CD14-positive monocyte (primary cell): ENCODE measurements at regions of chr14 and their contacts with region 1.

Region 1: DNA sequence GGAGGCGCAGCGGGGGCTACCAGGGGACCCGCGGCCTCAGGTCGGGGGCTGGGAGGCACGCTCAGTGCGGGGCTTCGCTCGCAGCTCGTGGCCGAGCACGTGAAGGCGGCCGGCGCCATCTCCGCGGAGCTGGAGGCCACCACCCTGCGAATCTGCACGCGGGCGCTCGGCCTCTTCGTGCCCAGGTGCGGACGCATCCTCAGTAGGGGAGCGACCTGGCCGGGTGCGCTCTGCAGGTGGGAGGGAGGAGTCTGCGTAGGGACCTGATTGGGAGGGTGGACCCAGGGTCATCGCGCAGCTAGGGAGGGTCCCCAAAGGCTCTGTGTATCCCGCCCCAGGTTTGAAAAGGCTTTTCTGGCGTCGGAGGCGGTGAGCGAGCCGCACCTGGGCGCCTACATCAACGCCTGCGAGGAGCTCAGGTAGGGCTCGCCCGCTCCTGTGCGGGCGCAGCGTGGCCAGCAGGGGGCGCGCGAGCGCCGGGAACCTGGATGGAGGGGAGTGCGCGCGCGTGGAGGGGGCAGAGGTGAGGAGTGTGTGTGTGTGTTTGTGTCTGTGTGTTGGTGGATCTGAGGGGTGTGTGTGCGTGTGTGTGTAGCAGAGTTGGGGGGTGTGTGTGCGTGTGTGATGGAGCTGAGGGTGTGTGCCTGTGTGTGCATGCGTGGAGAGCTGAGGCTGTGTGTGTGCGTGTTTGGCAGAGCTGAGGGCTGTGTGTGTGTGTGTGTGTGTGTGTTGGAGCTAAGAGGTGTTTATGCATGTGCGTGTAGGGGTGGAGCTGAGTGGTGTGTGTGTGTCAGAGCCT is 10.3 kb downstream of the EXOC3L4 start:
- DNase-seq: peak; percentile 55 to 69 (median 61)
- H3K4me3 ChIP-seq: peak overlapping the region in 1 of 3 experiments; percentile 28
- H3K4me3 Mint-ChIP-seq: peak overlapping the region in 1 of 2 donors; percentile 75
- H3K27ac ChIP-seq: no peak overlapping the region
- H3K27ac Mint-ChIP-seq: peak overlapping the region in 4 of 7 donors; percentile 20 to 65 (median 46)
- H3K4me1 ChIP-seq: peaks cover 39 to 61% of the 10 kb centered on the region in 2 donors
- H3K4me1 Mint-ChIP-seq: peaks cover 32% of the 10 kb centered on the region
- H3K27me3 ChIP-seq: peaks cover 21 to 38% of the 10 kb centered on the region in 2 donors
- H3K27me3 Mint-ChIP-seq: peaks cover 40 to 52% (median 44%) of the 10 kb centered on the region in 3 donors
- CTCF ChIP-seq: peak; percentile 86

Region 2: DNA sequence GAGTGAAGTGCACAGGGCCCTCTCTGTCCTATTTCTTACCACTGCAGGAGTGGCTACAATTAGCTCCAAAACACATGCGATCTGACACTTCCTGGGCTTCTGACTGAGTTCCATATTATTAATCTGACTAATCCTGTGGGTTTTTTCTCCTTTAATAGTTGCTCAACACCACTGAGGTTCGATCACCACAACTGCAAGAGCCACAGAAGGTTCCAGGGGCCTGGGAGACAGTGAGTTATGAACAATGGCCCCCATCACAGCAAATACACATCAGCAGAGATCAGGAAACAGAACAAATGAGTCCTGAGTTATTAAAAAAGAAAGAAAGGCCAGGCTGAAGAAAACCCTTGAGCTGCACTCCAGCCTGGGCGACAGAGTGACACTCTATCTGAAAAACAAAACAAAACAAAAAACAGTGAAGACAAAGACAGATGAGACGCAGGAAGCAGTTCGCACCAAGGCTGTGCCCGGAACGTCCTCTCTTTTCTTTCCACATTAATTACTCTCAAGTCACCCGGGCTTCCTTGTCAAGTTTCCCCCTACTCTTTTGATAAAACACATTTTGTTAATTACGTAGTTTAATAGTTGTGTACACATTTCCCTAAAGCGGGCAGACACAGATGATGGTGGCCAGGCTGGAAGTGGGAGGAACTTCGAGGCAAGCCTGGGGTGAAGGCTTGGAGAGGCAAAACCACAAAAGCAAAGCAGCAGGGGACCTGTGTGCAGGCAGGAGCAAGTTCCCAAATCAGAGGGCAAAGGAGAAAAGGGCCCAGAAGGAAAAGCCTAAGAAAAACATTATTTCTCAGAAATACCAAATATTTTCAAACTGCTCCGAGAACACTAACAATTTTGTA is 90.2 kb before region 1 on chr14:
- intact Hi-C with region 1: no loop called
- DNase-seq: no peak
- H3K4me3 ChIP-seq: peak overlapping the region in 1 of 3 experiments; percentile 7
- H3K4me3 Mint-ChIP-seq: peak overlapping the region; percentile 21 to 81
- H3K27ac ChIP-seq: no peak overlapping the region
- H3K27ac Mint-ChIP-seq: peak overlapping the region in 6 of 7 donors; percentile 17 to 50 (median 44)
- H3K4me1 ChIP-seq: peaks cover 10 to 12% of the 10 kb centered on the region in 2 donors
- H3K4me1 Mint-ChIP-seq: peaks cover 25% of the 10 kb centered on the region
- H3K27me3 ChIP-seq: no peaks in the 10 kb centered on the region
- H3K27me3 Mint-ChIP-seq: peaks cover 0 to 5% (median 2%) of the 10 kb centered on the region in 3 donors
- CTCF ChIP-seq: no peak

Region 3: DNA sequence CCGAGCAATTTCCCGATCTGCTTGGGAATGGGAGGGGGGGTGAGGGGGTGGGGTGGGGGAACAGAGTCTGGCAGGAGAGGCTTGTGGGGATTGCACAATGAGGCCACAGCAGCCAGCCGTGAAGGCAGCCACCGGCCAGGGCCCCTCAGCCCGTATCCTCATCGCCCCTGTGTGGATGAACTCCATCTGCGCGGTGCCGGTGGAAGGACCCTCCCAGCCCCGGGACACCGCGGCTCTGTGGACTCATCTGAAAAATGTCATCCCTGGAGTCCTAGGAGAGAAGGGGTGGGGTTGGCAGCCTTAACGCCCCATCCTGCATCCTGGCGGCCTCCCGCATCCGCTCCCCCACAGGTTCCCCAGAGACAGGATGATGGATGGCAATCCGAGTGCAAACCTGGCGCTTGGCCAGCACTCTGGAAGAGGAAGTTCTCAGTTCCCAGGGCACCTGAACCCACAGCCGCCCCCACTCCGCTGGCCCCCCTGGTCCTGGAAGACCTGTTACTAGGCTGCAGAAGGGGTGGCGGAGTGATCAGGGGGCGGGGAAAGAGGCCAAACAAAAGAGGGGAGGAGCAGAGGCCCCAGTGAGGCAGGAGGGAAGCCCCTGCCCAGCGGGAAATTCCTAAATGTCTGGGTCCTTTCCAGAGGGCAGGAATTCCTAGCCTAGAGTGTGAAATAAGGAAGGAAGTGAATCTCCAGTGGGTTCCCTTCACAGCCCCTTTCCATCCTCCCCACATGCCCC is 17.2 kb after region 1 on chr14:
- intact Hi-C with region 1: loop called (anchors 1 to 2 kb)
- DNase-seq: peak; percentile 68 to 94 (median 79)
- H3K4me3 ChIP-seq: peak overlapping the region; percentile 70 to 95 (median 95)
- H3K4me3 Mint-ChIP-seq: peak overlapping the region; percentile 87 to 94
- H3K27ac ChIP-seq: peak overlapping the region; percentile 99
- H3K27ac Mint-ChIP-seq: peak overlapping the region; percentile 96 to 99 (median 98)
- H3K4me1 ChIP-seq: peaks cover 75 to 92% of the 10 kb centered on the region in 2 donors
- H3K4me1 Mint-ChIP-seq: peaks cover 64% of the 10 kb centered on the region
- H3K27me3 ChIP-seq: no peaks in the 10 kb centered on the region
- H3K27me3 Mint-ChIP-seq: peaks cover 0 to 2% (median 0%) of the 10 kb centered on the region in 3 donors
- CTCF ChIP-seq: no peak

Region 4: GRCh38 chr14:103141119-103141796 is 36.4 kb after region 1 on chr14:
- intact Hi-C with region 1: loop called (anchors 1 to 5 kb)
- DNase-seq: peak; percentile 36 to 64 (median 41)
- H3K4me3 ChIP-seq: no peak overlapping the region
- H3K4me3 Mint-ChIP-seq: no peak overlapping the region
- H3K27ac ChIP-seq: no peak overlapping the region
- H3K27ac Mint-ChIP-seq: no peak overlapping the region
- H3K4me1 ChIP-seq: peaks cover 15 to 27% of the 10 kb centered on the region in 2 donors
- H3K4me1 Mint-ChIP-seq: peaks cover 24% of the 10 kb centered on the region
- H3K27me3 ChIP-seq: peaks cover 0 to 21% of the 10 kb centered on the region in 2 donors
- H3K27me3 Mint-ChIP-seq: peaks cover 28 to 43% (median 36%) of the 10 kb centered on the region in 3 donors
- CTCF ChIP-seq: peak; percentile 79

Region 5: GRCh38 chr14:103185051-103185992 is 80.5 kb after region 1 on chr14:
- intact Hi-C with region 1: loop called (anchors 2 to 5 kb)
- DNase-seq: peak in 1 of 3 donors; percentile 25
- H3K4me3 ChIP-seq: no peak overlapping the region
- H3K4me3 Mint-ChIP-seq: peak overlapping the region in 1 of 2 donors; percentile 72
- H3K27ac ChIP-seq: no peak overlapping the region
- H3K27ac Mint-ChIP-seq: peak overlapping the region in 1 of 7 donors; percentile 78
- H3K4me1 ChIP-seq: peaks cover 2 to 9% of the 10 kb centered on the region in 2 donors
- H3K4me1 Mint-ChIP-seq: peaks cover 4% of the 10 kb centered on the region
- H3K27me3 ChIP-seq: peaks cover 37 to 42% of the 10 kb centered on the region in 2 donors
- H3K27me3 Mint-ChIP-seq: peaks cover 40 to 54% (median 53%) of the 10 kb centered on the region in 3 donors
- CTCF ChIP-seq: peak; percentile 82